GM10248 (cell line): ENCODE measurements at regions of chr6 and their contacts with region 1.

Region 1: DNA sequence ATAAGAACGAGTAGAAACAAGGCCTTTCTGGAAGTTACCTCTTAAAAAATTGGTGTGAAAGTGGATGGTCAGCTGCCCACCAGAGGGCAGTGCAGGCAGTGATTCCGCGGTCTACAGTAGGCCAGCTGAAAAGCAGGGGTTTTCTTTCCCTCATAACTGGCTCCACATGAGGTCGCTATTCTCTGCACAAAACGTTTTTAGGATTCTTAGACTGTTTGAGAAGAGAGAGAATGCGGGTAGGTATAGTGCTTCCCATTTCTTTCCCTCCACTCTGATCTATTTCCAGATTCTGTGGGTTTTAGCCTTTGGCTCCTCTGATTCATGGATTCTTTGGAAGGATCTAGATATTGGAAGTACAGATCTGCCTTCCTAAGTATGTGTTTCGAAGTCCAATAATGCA is 14.2 kb downstream of the FIG4 start:
- DNase-seq: peak; percentile 67
- CTCF ChIP-seq: peak; percentile 97

Region 2: DNA sequence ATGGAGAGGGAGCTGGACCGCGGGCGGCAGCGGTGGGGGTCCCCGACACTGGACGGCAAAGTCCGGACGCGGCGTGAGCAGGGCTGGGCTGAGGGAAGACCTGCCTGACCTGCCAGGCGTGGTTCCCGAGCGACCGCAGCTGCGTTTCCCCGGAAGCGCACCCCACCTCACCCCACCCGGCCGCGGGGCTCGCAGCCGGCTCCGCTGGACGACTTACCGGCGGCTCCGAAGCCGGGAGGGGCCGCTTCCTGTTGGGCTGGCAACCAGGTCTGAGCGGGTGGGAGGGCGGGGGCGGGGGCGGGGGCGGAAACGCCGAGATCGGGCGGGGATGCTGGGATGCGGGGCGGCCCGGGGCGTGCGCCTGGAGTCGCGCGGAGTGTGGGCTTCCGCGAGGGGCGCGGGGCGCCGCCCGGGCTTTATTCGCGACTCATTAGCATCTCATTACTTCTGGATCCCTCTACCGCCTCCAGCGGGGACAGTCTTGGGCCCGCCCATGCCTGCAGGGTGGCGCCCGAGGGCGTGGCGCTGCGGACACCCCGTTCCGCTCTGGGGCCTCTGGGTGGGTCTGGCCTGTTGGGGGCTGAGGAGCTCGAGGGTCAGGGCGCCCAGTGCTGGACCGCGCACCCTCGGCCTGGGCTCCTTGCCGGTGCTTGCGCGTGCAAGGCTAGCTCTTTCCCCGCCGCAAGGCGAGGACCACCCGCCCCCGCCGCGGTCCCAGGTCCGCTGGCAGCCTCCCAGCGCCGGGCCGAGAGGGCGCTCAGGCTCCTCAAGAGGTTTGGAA is 249.6 kb before region 1 on chr6 and contains the start of gene MICAL1:
- CTCF ChIA-PET with region 1: no interaction called
- POLR2A ChIA-PET with region 1: no interaction called
- DNase-seq: peak; percentile 83
- CTCF ChIP-seq: peak; percentile 13

Region 3: GRCh38 chr6:109561844-109562243 is 143.4 kb before region 1 on chr6:
- CTCF ChIA-PET with region 1: no interaction called
- POLR2A ChIA-PET with region 1: no interaction called
- DNase-seq: no peak
- CTCF ChIP-seq: no peak

Region 4: DNA sequence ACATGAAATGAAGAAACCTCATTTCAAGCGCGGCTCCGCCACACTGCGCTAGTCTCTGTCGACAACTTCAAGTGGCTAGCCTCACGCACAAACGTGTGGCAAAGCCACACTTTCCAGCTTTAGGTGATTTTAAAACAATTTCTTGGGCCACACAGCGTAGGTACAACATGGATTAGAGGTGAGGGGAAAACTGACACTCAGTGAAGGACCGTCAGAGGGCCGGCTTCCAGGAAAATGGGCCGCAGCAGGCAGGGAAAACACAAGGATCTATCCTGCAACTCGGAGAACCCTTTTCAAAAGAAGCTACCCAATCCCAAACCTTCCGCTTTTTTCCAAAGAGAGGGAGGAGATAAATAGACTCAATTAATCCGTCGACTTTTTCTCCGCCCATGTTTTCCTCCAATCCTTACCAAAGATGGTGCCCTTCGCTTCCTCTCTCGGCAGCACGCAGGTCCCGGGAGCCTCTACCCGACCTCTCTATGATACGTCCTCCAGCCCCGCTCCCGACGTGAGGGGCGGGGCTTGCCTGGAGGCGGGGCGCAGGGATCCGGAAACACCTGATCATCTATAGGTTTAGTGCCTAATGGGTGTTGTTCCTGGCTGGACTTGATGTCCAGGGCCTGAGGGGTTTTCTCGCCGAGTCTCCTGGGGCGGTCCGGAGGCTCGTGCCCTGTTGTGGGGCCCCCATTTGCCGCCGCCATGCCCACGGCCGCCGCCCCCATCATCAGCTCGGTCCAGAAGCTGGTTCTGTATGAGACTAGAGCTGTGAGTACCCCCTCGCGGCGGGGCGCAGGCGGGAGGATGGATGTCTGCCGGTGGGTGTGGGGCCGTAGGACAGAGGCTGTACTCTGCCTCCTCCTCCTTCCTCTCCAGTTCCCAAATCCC is 14.3 kb before region 1 on chr6 and contains the starts of genes AK9 and FIG4:
- CTCF ChIA-PET with region 1: interaction called, 23 read pairs
- POLR2A ChIA-PET with region 1: no interaction called
- DNase-seq: peak; percentile 92
- CTCF ChIP-seq: peak; percentile 24

Region 5: GRCh38 chr6:109740787-109741186 is 35.5 kb after region 1 on chr6:
- CTCF ChIA-PET with region 1: no interaction called
- POLR2A ChIA-PET with region 1: no interaction called
- DNase-seq: no peak
- CTCF ChIP-seq: no peak

Region 6: DNA sequence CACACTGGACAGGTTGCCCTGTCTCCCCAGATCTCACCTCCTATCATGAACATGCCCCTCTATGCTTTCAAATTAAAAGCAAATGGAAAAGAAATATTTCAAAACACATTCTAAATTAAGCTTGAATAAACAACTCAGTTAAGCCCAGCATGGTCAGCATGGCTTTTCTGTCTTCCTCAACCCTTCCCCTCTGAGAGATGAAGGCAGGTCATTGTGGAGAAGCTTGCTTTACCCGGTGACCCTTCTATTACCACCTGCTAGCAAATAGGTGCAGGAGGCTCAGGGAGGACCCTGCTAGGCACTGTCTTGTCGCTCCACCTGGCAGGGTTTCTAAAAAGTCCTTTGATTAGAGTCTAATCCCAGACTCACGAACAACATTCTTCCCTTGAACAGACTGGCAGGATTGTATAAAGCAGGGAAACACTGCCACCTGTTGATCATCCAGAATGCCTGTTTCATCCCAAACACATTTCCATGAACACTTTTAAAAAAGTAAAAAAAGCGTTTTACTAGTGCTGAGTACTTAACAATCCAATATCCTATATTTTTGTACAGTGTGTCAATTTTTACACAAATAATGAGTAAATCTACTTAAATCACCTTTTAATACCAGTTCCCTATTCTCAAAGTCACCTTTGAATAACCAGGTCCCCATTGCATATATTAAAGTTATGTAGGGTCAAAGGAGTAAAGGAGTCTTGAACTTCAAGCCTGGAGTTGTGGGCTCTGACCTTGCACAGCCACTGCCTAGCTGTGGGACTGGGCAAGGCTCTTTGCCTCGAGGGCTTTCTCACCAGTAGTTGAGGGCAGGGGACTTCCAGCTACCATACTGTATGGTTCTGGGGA is 348.4 kb after region 1 on chr6:
- CTCF ChIA-PET with region 1: interaction called, 32 read pairs
- POLR2A ChIA-PET with region 1: no interaction called
- DNase-seq: peak; percentile 50
- CTCF ChIP-seq: peak; percentile 70